GM12878 (cell line): ENCODE measurements at regions of chr16 and their contacts with region 1.

Region 1: DNA sequence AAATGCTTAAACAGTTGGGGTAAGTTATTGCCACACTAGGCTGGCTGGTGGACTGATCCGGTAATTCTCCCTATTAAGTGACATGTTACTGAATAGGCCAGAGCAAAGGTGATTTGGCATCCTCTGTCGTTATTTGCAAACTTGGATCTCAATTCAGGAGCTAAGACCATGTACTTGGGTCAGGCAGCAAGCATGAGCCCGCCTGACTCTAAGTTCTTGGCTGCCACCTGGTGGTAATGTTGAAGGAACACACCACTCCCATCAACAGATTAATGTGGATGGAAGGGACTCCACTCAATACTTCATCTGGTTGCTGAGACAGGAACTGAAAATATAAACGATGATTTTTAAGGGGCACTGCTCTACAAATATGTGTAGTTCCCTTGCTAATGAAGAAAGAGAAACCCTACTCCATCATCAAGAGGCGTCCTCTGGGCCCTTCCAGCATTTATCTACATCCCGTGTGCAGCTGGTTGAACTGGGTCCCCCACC is 70.8 kb downstream of the EMP2 start:
- DNase-seq: peak; percentile 70
- ATAC-seq: peak; percentile 99
- H3K4me3 ChIP-seq: no peak overlapping the region
- H3K27ac ChIP-seq: no peak overlapping the region
- H3K4me1 ChIP-seq: peaks cover 3% of the 10 kb centered on the region; the same call in 1 of the 2 replicates
- H3K27me3 ChIP-seq: no peaks in the 10 kb centered on the region
- CTCF ChIP-seq: peak; percentile 77 to 92 (median 86)
- EP300 ChIP-seq: no peak
- POLR2A ChIP-seq: no peak
- RAD21 ChIP-seq: peak; percentile 97

Region 2: GRCh38 chr16:9258423-9259051 is 1251.0 kb before region 1 on chr16:
- CTCF ChIA-PET with region 1: interaction called, 5 read pairs
- POLR2A ChIA-PET with region 1: no interaction called
- RAD21 ChIA-PET with region 1: interaction called, 4 read pairs
- SMC1A ChIA-PET with region 1: interaction called, 4 read pairs
- in situ Hi-C with region 1: no loop called
- intact Hi-C with region 1: loop called (anchors 2 kb)
- DNase-seq: no peak
- ATAC-seq: peak; percentile 95
- H3K4me3 ChIP-seq: no peak overlapping the region
- H3K27ac ChIP-seq: no peak overlapping the region
- H3K4me1 ChIP-seq: no peaks in the 10 kb centered on the region
- H3K27me3 ChIP-seq: no peaks in the 10 kb centered on the region; a peak in 1 of 4 replicates
- CTCF ChIP-seq: peak; percentile 69 to 76 (median 71)
- EP300 ChIP-seq: no peak
- POLR2A ChIP-seq: no peak
- RAD21 ChIP-seq: peak; percentile 57

Region 3: GRCh38 chr16:9836118-9836736 is 673.4 kb before region 1 on chr16:
- CTCF ChIA-PET with region 1: no interaction called
- POLR2A ChIA-PET with region 1: no interaction called
- RAD21 ChIA-PET with region 1: no interaction called
- SMC1A ChIA-PET with region 1: no interaction called
- in situ Hi-C with region 1: no loop called
- intact Hi-C with region 1: no loop called
- DNase-seq: no peak
- ATAC-seq: no peak
- H3K4me3 ChIP-seq: no peak overlapping the region
- H3K27ac ChIP-seq: no peak overlapping the region
- H3K4me1 ChIP-seq: peaks cover 4% of the 10 kb centered on the region; the same call in 1 of the 2 replicates
- H3K27me3 ChIP-seq: no peaks in the 10 kb centered on the region
- CTCF ChIP-seq: no peak
- EP300 ChIP-seq: no peak
- POLR2A ChIP-seq: no peak
- RAD21 ChIP-seq: no peak

Region 4: GRCh38 chr16:10122546-10122945 is 387.0 kb before region 1 on chr16:
- CTCF ChIA-PET with region 1: no interaction called
- POLR2A ChIA-PET with region 1: no interaction called
- RAD21 ChIA-PET with region 1: no interaction called
- SMC1A ChIA-PET with region 1: no interaction called
- in situ Hi-C with region 1: no loop called
- intact Hi-C with region 1: no loop called
- DNase-seq: no peak
- ATAC-seq: peak; percentile 21; the same call in 1 of the 3 replicates
- H3K4me3 ChIP-seq: no peak overlapping the region
- H3K27ac ChIP-seq: no peak overlapping the region
- H3K4me1 ChIP-seq: no peaks in the 10 kb centered on the region
- H3K27me3 ChIP-seq: no peaks in the 10 kb centered on the region
- CTCF ChIP-seq: peak; percentile 26 to 31 (median 27); a peak in 4 of 6 replicates
- EP300 ChIP-seq: no peak
- POLR2A ChIP-seq: no peak
- RAD21 ChIP-seq: peak; percentile 30

Region 5: DNA sequence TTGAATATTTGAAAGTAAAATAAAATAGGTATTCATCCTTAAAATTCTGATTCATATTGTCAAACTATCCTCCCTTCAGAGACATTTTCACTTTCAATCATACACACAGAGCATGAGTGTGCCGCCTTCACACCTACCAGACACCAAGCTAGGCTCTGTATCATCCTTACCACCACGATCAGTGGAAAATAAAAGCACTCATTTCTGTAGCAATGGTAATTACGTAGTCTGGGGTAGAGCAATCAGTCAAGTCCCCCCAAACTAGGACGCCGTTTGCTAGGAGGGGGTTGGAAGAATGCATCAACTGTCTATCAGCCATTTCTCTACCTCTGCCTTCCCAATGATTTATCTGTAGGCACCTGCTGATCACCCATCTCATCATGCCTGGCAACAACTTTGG is 242.8 kb before region 1 on chr16:
- CTCF ChIA-PET with region 1: interaction called, 12 read pairs
- POLR2A ChIA-PET with region 1: no interaction called
- RAD21 ChIA-PET with region 1: interaction called, 3 read pairs
- SMC1A ChIA-PET with region 1: interaction called, 193 read pairs
- in situ Hi-C with region 1: no loop called
- intact Hi-C with region 1: no loop called
- DNase-seq: peak; percentile 54
- ATAC-seq: peak; percentile 98
- H3K4me3 ChIP-seq: no peak overlapping the region
- H3K27ac ChIP-seq: no peak overlapping the region
- H3K4me1 ChIP-seq: peaks cover 9% of the 10 kb centered on the region
- H3K27me3 ChIP-seq: no peaks in the 10 kb centered on the region
- CTCF ChIP-seq: no peak
- EP300 ChIP-seq: peak; percentile 5 to 63; a peak in 1 of 4 replicates
- POLR2A ChIP-seq: no peak
- RAD21 ChIP-seq: no peak

Region 6: GRCh38 chr16:10581507-10581906 is 71.9 kb after region 1 on chr16:
- CTCF ChIA-PET with region 1: no interaction called
- POLR2A ChIA-PET with region 1: no interaction called
- RAD21 ChIA-PET with region 1: no interaction called
- SMC1A ChIA-PET with region 1: no interaction called
- in situ Hi-C with region 1: no loop called
- intact Hi-C with region 1: no loop called
- DNase-seq: no peak
- ATAC-seq: no peak
- H3K4me3 ChIP-seq: no peak overlapping the region
- H3K27ac ChIP-seq: no peak overlapping the region
- H3K4me1 ChIP-seq: no peaks in the 10 kb centered on the region; the same call in 1 of the 2 replicates
- H3K27me3 ChIP-seq: peaks cover 10 to 22% of the 10 kb centered on the region in 2 experiments
- CTCF ChIP-seq: no peak
- EP300 ChIP-seq: no peak
- POLR2A ChIP-seq: no peak
- RAD21 ChIP-seq: no peak

Region 7: GRCh38 chr16:10731790-10732189 is 222.2 kb after region 1 on chr16:
- CTCF ChIA-PET with region 1: interaction called, 191 read pairs
- POLR2A ChIA-PET with region 1: interaction called, 3 read pairs
- RAD21 ChIA-PET with region 1: interaction called, 85 read pairs
- SMC1A ChIA-PET with region 1: interaction called, 104 read pairs
- in situ Hi-C with region 1: loop called (anchors 5 kb)
- intact Hi-C with region 1: no loop called
- DNase-seq: no peak
- ATAC-seq: no peak
- H3K4me3 ChIP-seq: no peak overlapping the region
- H3K27ac ChIP-seq: no peak overlapping the region
- H3K4me1 ChIP-seq: no peaks in the 10 kb centered on the region
- H3K27me3 ChIP-seq: no peaks in the 10 kb centered on the region
- CTCF ChIP-seq: no peak
- EP300 ChIP-seq: no peak
- POLR2A ChIP-seq: no peak
- RAD21 ChIP-seq: no peak

Region 8: DNA sequence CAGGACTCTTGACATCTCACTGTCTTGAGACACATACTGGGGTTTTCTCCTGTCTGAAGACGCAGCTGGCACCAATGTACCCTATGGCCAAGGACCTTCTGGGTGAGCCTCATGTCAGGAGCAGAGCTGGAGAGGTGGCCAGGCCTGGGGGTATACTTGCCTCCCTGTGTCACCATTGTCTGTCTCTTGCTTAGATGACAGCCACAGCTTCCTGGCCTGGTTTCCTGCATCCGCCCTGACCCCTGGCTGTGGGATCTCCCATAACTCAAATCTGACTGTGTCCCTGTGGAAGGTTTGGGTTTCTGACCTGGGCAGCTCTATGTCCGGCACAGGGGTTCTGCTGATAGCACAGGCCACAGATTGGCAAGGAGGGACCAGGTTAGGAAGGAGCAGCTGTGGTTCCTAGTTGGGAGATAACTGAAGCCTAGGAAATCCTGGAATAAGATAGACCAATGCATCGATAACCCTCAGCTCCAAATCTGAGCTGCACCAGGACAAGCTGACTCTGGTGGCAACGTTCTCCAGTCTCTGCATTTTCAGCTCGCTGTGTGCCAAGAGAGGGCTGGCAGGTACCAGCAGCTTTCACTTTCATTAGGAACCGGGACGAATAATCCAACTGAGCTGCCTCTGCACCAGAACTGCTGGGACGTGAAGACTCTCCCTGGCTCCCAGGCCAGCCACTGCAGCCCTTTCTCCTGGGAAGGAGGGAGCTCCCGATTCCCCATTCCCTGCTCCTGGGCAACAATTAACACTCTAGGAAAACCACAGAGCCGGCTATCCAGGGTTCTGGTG is 427.7 kb after region 1 on chr16:
- CTCF ChIA-PET with region 1: interaction called, 14 read pairs
- POLR2A ChIA-PET with region 1: no interaction called
- RAD21 ChIA-PET with region 1: interaction called, 10 read pairs
- SMC1A ChIA-PET with region 1: interaction called, 4 read pairs
- in situ Hi-C with region 1: no loop called
- intact Hi-C with region 1: no loop called
- DNase-seq: no peak
- ATAC-seq: peak; percentile 4
- H3K4me3 ChIP-seq: peak overlapping the region; percentile 82; the same call in 1 of the 2 replicates
- H3K27ac ChIP-seq: peak overlapping the region; percentile 23
- H3K4me1 ChIP-seq: peaks cover 42% of the 10 kb centered on the region
- H3K27me3 ChIP-seq: no peaks in the 10 kb centered on the region
- CTCF ChIP-seq: peak in 1 of 3 experiments; percentile 22; a peak in 1 of 6 replicates
- EP300 ChIP-seq: no peak
- POLR2A ChIP-seq: no peak; the same call in 1 of the 2 replicates
- RAD21 ChIP-seq: no peak

Region 9: GRCh38 chr16:10942233-10943063 is 432.9 kb after region 1 on chr16 and contains the start of gene DEXI:
- CTCF ChIA-PET with region 1: interaction called, 14 read pairs
- POLR2A ChIA-PET with region 1: no interaction called
- RAD21 ChIA-PET with region 1: interaction called, 10 read pairs
- SMC1A ChIA-PET with region 1: interaction called, 4 read pairs
- in situ Hi-C with region 1: no loop called
- intact Hi-C with region 1: no loop called
- DNase-seq: peak; percentile 69
- ATAC-seq: peak; percentile 80
- H3K4me3 ChIP-seq: peak within 1 kb of the TSS; percentile 82
- H3K27ac ChIP-seq: peak within 1 kb of the TSS; percentile 72
- H3K4me1 ChIP-seq: peaks cover 32% of the 10 kb centered on the region
- H3K27me3 ChIP-seq: no peaks in the 10 kb centered on the region
- CTCF ChIP-seq: peak in 1 of 3 experiments; percentile 9; a peak in 1 of 6 replicates
- EP300 ChIP-seq: no peak
- POLR2A ChIP-seq: peak; percentile 79
- RAD21 ChIP-seq: no peak
- polyA plus RNA-seq, gene DEXI: 1.4 to 4.3 TPM

Region 10: DNA sequence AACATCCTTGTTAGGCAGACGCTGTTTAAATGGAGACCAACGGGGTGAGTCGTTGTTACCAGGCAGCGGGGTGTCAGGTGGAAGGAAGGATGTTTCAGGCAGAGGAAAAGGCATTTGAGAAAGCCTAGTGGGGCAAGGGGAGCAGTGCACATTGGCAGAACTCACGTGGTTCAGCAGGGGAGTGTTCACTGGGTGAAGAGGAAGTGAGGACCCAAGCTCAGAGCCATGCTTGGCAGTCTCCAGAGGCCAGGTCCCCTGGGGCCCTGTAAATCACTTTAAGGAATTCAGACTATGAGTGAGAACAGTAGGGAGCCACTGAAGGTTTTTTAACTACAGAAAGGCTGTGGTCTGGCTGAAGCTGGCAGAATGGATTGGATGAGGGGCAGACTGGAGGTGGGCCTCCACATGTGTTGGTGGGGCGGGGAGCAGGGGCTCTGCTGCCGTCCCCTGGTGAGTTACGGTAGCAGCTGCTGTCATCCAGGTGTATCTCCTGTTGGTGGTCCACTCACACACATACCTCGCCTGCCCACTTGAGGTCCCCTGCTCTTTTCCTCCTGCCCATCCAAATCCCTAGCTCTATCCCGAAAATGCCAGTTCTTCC is 439.9 kb after region 1 on chr16:
- CTCF ChIA-PET with region 1: interaction called, 10 read pairs
- POLR2A ChIA-PET with region 1: no interaction called
- RAD21 ChIA-PET with region 1: interaction called, 14 read pairs
- SMC1A ChIA-PET with region 1: interaction called, 7 read pairs
- in situ Hi-C with region 1: no loop called
- intact Hi-C with region 1: no loop called
- DNase-seq: peak; percentile 91
- ATAC-seq: peak; percentile 83
- H3K4me3 ChIP-seq: peak overlapping the region; percentile 28; the same call in 1 of the 2 replicates
- H3K27ac ChIP-seq: peak overlapping the region; percentile 62
- H3K4me1 ChIP-seq: peaks cover 27% of the 10 kb centered on the region
- H3K27me3 ChIP-seq: no peaks in the 10 kb centered on the region
- CTCF ChIP-seq: peak; percentile 34 to 55 (median 49); a peak in 2 of 6 replicates
- EP300 ChIP-seq: peak; percentile 9 to 33; a peak in 1 of 4 replicates
- POLR2A ChIP-seq: no peak
- RAD21 ChIP-seq: no peak